Calu3 (cell line): ENCODE measurements at regions of chr5 and their contacts with region 1.

Region 1: DNA sequence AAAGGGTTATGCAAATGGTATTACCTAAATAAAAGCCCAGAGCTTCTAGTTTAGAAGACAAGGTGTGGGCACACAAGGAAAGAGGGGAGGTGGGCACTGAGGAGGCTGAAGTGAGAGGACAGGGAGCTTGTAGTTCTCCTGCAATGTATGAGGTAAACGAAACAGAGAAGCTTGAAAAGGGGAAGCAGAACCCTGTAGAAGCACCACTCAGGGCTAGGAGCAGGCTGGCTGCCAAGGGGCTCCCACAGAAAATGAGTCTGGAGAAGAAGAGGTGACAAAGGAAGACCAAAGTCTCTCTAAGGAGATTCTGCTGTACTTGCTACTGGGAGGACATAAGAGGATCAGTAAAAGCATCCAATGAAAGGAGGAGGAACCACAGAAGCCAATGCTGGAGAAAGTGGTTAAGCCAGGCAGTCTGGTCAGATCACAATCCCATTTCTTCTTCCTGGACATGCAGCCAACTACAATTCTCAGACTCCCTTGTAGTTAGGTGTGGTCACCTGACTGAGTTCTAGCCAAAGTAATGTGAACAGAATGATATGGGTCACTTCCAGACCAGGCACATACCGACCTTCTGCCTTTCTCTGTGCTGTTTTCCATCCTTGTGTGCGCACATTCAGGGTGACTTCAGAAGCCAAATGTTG is 174.5 kb upstream of the MAP3K1 start:
- DNase-seq: peak; percentile 71
- H3K4me3 Mint-ChIP-seq: peak overlapping the region; percentile 63
- H3K27ac Mint-ChIP-seq: peak overlapping the region; percentile 97
- H3K4me1 Mint-ChIP-seq: peaks cover 70% of the 10 kb centered on the region
- H3K27me3 Mint-ChIP-seq: no peaks in the 10 kb centered on the region
- CTCF ChIP-seq: no peak

Region 2: DNA sequence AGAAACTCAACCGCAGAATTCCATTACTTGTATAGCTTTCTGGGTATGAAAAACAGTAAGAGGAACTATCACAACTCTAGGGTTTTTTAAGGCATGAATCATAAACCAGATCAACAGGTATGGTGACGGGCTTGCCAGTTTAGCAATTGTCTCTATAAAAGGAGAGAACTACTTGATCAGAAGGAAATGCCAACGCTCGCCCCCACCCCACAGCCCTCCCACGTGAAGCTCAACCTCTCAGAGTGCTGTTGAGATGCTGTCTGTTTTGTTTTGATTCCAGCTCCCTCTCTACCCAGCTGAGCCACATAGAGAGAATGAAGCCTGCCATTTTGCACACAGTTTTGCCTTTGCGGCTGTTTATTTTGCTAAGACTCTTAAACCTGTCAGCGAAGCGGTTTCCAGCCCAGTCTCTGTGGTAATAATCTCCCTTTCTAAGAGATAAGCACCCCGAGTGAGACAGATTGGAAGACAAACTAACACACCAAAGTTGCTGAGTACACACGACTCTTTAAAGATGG is 149.9 kb before region 1 on chr5:
- CTCF ChIA-PET with region 1: interaction called, 3 read pairs
- intact Hi-C with region 1: loop called (anchors 2 kb)
- DNase-seq: peak; percentile 88
- H3K4me3 Mint-ChIP-seq: peak overlapping the region; percentile 22
- H3K27ac Mint-ChIP-seq: peak overlapping the region; percentile 81
- H3K4me1 Mint-ChIP-seq: peaks cover 28% of the 10 kb centered on the region
- H3K27me3 Mint-ChIP-seq: no peaks in the 10 kb centered on the region
- CTCF ChIP-seq: no peak

Region 3: GRCh38 chr5:56522960-56523359 is 117.9 kb before region 1 on chr5:
- CTCF ChIA-PET with region 1: no interaction called
- intact Hi-C with region 1: loop called (anchors 5 kb)
- DNase-seq: no peak
- H3K4me3 Mint-ChIP-seq: no peak overlapping the region
- H3K27ac Mint-ChIP-seq: no peak overlapping the region
- H3K4me1 Mint-ChIP-seq: peaks cover 60% of the 10 kb centered on the region
- H3K27me3 Mint-ChIP-seq: no peaks in the 10 kb centered on the region
- CTCF ChIP-seq: no peak

Region 4: GRCh38 chr5:56814963-56815658 is 174.2 kb after region 1 on chr5 and contains the start of gene MAP3K1:
- CTCF ChIA-PET with region 1: interaction called, 4 read pairs
- intact Hi-C with region 1: loop called (anchors 2 kb)
- DNase-seq: peak; percentile 92
- H3K4me3 Mint-ChIP-seq: peak within 1 kb of the TSS; percentile 94
- H3K27ac Mint-ChIP-seq: peak within 1 kb of the TSS; percentile 72
- H3K4me1 Mint-ChIP-seq: peaks cover 10% of the 10 kb centered on the region
- H3K27me3 Mint-ChIP-seq: no peaks in the 10 kb centered on the region
- CTCF ChIP-seq: no peak
- total RNA-seq, gene MAP3K1: 32.9 and 33.1 TPM in 2 replicates